CD8-positive, alpha-beta T cell (primary cell): ENCODE measurements at regions of chr3 and their contacts with region 1.

Region 1: GRCh38 chr3:12663936-12664908 is at the start of gene RAF1:
- DNase-seq: peak; percentile 94 to 99 (median 97)
- ATAC-seq: peak; percentile 93
- H3K4me3 ChIP-seq: peak within 1 kb of the TSS; percentile 83 to 93
- H3K4me3 Mint-ChIP-seq: peak within 1 kb of the TSS; percentile 90
- H3K27ac ChIP-seq: peak within 1 kb of the TSS; percentile 96 to 99
- H3K27ac Mint-ChIP-seq: peak within 1 kb of the TSS; percentile 99
- H3K4me1 ChIP-seq: peaks cover 30% of the 10 kb centered on the region
- H3K4me1 Mint-ChIP-seq: peaks cover 34% of the 10 kb centered on the region
- H3K27me3 ChIP-seq: no peaks in the 10 kb centered on the region
- H3K27me3 Mint-ChIP-seq: no peaks in the 10 kb centered on the region
- CTCF ChIP-seq: no peak
- total RNA-seq, gene RAF1: 156 to 159 TPM

Region 2: GRCh38 chr3:12363397-12364195 is 300.6 kb before region 1 on chr3:
- CTCF ChIA-PET with region 1: no interaction called
- POLR2A ChIA-PET with region 1: no interaction called
- intact Hi-C with region 1: no loop called
- DNase-seq: peak in 1 of 9 experiments; percentile 6
- ATAC-seq: no peak
- H3K4me3 ChIP-seq: no peak overlapping the region
- H3K4me3 Mint-ChIP-seq: no peak overlapping the region
- H3K27ac ChIP-seq: no peak overlapping the region
- H3K27ac Mint-ChIP-seq: no peak overlapping the region
- H3K4me1 ChIP-seq: peaks cover 10% of the 10 kb centered on the region
- H3K4me1 Mint-ChIP-seq: peaks cover 12% of the 10 kb centered on the region
- H3K27me3 ChIP-seq: no peaks in the 10 kb centered on the region
- H3K27me3 Mint-ChIP-seq: no peaks in the 10 kb centered on the region
- CTCF ChIP-seq: no peak

Region 3: GRCh38 chr3:12489832-12490231 is 174.4 kb before region 1 on chr3:
- CTCF ChIA-PET with region 1: no interaction called
- POLR2A ChIA-PET with region 1: no interaction called
- intact Hi-C with region 1: loop called in 1 of 2 experiments (anchors 5 kb)
- DNase-seq: no peak
- ATAC-seq: no peak
- H3K4me3 ChIP-seq: no peak overlapping the region
- H3K4me3 Mint-ChIP-seq: no peak overlapping the region
- H3K27ac ChIP-seq: no peak overlapping the region
- H3K27ac Mint-ChIP-seq: no peak overlapping the region
- H3K4me1 ChIP-seq: peaks cover 8% of the 10 kb centered on the region
- H3K4me1 Mint-ChIP-seq: peaks cover 22% of the 10 kb centered on the region
- H3K27me3 ChIP-seq: no peaks in the 10 kb centered on the region
- H3K27me3 Mint-ChIP-seq: no peaks in the 10 kb centered on the region
- CTCF ChIP-seq: no peak

Region 4: DNA sequence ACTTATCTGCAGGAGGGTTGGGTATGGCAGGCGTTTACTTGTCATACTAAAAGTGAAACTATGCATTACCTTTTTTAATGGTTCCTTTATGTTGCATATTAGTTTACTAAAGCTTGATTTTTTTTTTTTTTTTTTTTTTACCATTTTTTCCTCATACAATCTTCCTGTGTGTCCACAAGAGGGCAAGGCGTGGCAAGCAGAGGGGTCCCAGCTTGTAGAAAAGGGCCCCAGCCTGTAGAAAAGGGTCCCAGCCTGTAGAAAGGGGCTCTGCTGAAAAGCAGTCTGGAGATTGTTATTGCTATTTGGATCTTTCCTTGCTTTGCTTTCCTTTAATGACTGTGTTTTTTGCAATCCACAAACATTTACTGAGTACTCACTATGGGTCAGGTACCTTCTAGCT is 85.5 kb before region 1 on chr3:
- CTCF ChIA-PET with region 1: no interaction called
- POLR2A ChIA-PET with region 1: interaction called, 3 read pairs
- intact Hi-C with region 1: loop called in 1 of 2 experiments (anchors 1 kb)
- DNase-seq: peak in 2 of 9 experiments; percentile 17 to 25
- ATAC-seq: peak; percentile 23
- H3K4me3 ChIP-seq: no peak overlapping the region
- H3K4me3 Mint-ChIP-seq: no peak overlapping the region
- H3K27ac ChIP-seq: no peak overlapping the region
- H3K27ac Mint-ChIP-seq: no peak overlapping the region
- H3K4me1 ChIP-seq: no peaks in the 10 kb centered on the region
- H3K4me1 Mint-ChIP-seq: peaks cover 2% of the 10 kb centered on the region
- H3K27me3 ChIP-seq: no peaks in the 10 kb centered on the region
- H3K27me3 Mint-ChIP-seq: no peaks in the 10 kb centered on the region
- CTCF ChIP-seq: peak; percentile 13

Region 5: DNA sequence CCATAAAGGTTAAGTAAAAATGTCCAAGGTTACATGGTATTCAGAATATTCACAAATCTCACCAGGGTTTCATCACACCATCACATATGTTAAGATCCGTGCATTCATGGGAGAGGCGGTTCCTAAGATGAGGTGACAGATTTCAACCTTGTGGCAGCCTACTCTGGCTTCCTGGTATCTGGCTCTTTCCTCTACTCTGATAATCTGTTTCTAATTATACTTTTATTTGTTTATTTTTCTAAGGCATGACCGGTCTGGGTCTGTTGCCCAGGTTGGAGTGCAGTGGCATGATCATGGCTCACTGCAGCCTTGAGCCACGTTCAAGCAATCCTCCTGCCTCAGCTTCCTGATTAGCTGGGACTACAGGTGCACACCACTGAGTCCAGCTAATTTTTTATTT is 34.7 kb before region 1 on chr3:
- CTCF ChIA-PET with region 1: no interaction called
- POLR2A ChIA-PET with region 1: interaction called, 3 read pairs
- intact Hi-C with region 1: loop called in 1 of 2 experiments (anchors 5 kb)
- DNase-seq: no peak
- ATAC-seq: no peak
- H3K4me3 ChIP-seq: no peak overlapping the region
- H3K4me3 Mint-ChIP-seq: no peak overlapping the region
- H3K27ac ChIP-seq: no peak overlapping the region
- H3K27ac Mint-ChIP-seq: no peak overlapping the region
- H3K4me1 ChIP-seq: peaks cover 23% of the 10 kb centered on the region
- H3K4me1 Mint-ChIP-seq: peaks cover 61% of the 10 kb centered on the region
- H3K27me3 ChIP-seq: no peaks in the 10 kb centered on the region
- H3K27me3 Mint-ChIP-seq: no peaks in the 10 kb centered on the region
- CTCF ChIP-seq: no peak

Region 6: GRCh38 chr3:12810013-12810780 is 146.0 kb after region 1 on chr3:
- CTCF ChIA-PET with region 1: no interaction called
- POLR2A ChIA-PET with region 1: no interaction called
- intact Hi-C with region 1: loop called in 1 of 2 experiments (anchors 1 kb)
- DNase-seq: peak; percentile 87 to 98 (median 96)
- ATAC-seq: peak; percentile 99
- H3K4me3 ChIP-seq: peak overlapping the region; percentile 51 to 73
- H3K4me3 Mint-ChIP-seq: peak overlapping the region; percentile 73
- H3K27ac ChIP-seq: no peak overlapping the region
- H3K27ac Mint-ChIP-seq: peak overlapping the region; percentile 64
- H3K4me1 ChIP-seq: peaks cover 8% of the 10 kb centered on the region
- H3K4me1 Mint-ChIP-seq: peaks cover 11% of the 10 kb centered on the region
- H3K27me3 ChIP-seq: no peaks in the 10 kb centered on the region
- H3K27me3 Mint-ChIP-seq: no peaks in the 10 kb centered on the region
- CTCF ChIP-seq: peak; percentile 89

Region 7: DNA sequence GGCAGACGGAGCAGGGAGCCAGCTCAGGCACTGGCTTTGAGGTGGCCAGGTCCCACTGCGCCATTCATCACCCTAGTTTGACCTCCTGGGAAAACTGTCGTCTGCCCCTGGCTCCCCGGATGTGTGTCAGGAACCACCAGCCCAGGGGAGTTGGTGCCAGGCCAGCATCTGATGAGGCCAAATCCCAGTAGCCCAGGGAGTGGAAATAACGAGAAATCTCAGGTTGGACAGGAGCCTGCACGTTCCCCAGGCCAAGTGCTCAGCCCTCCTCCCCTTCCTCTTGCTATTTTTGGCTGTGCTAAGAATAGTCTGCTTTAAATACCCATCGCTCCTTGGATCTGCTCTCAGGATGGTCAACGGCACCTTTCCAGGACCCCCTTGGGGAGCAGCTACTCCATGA is 270.2 kb after region 1 on chr3:
- CTCF ChIA-PET with region 1: no interaction called
- POLR2A ChIA-PET with region 1: no interaction called
- intact Hi-C with region 1: no loop called
- DNase-seq: no peak
- ATAC-seq: no peak
- H3K4me3 ChIP-seq: no peak overlapping the region
- H3K4me3 Mint-ChIP-seq: no peak overlapping the region
- H3K27ac ChIP-seq: no peak overlapping the region
- H3K27ac Mint-ChIP-seq: no peak overlapping the region
- H3K4me1 ChIP-seq: no peaks in the 10 kb centered on the region
- H3K4me1 Mint-ChIP-seq: peaks cover 19% of the 10 kb centered on the region
- H3K27me3 ChIP-seq: no peaks in the 10 kb centered on the region
- H3K27me3 Mint-ChIP-seq: no peaks in the 10 kb centered on the region
- CTCF ChIP-seq: no peak

Region 8: DNA sequence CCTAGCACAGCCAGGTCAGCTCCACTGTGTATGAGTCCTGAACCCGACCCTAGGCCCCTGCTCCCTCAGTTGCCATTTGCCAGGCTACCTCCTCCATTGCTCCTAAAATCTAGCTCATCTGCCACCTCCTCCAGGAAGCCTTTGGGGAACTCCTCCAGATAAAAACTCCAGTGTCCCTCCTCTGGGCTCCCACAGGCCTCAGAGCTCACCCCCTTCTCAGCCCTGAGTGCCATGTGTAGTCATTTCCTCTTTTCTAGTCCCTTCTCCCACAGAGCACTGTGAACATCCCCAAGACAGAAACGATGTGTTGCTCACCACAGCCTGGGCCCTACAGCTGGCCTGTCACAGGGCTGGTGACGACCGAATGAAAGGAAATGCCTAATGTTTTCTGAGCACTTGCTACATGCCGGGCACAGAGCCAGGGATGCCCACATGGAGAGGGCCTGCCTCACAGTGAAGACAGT is 348.0 kb after region 1 on chr3:
- CTCF ChIA-PET with region 1: no interaction called
- POLR2A ChIA-PET with region 1: no interaction called
- intact Hi-C with region 1: loop called in 1 of 2 experiments (anchors 10 kb)
- DNase-seq: peak in 5 of 9 experiments; percentile 41 to 89 (median 70)
- ATAC-seq: peak; percentile 17
- H3K4me3 ChIP-seq: peak overlapping the region; percentile 4 to 12
- H3K4me3 Mint-ChIP-seq: peak overlapping the region; percentile 67
- H3K27ac ChIP-seq: peak overlapping the region; percentile 74 to 98
- H3K27ac Mint-ChIP-seq: peak overlapping the region; percentile 97
- H3K4me1 ChIP-seq: peaks cover 96% of the 10 kb centered on the region
- H3K4me1 Mint-ChIP-seq: peaks cover 80% of the 10 kb centered on the region
- H3K27me3 ChIP-seq: no peaks in the 10 kb centered on the region
- H3K27me3 Mint-ChIP-seq: no peaks in the 10 kb centered on the region
- CTCF ChIP-seq: no peak